Astrocyte of the cerebellum (primary cell): ENCODE measurements at regions of chr12 and their contacts with region 1.

Region 1: DNA sequence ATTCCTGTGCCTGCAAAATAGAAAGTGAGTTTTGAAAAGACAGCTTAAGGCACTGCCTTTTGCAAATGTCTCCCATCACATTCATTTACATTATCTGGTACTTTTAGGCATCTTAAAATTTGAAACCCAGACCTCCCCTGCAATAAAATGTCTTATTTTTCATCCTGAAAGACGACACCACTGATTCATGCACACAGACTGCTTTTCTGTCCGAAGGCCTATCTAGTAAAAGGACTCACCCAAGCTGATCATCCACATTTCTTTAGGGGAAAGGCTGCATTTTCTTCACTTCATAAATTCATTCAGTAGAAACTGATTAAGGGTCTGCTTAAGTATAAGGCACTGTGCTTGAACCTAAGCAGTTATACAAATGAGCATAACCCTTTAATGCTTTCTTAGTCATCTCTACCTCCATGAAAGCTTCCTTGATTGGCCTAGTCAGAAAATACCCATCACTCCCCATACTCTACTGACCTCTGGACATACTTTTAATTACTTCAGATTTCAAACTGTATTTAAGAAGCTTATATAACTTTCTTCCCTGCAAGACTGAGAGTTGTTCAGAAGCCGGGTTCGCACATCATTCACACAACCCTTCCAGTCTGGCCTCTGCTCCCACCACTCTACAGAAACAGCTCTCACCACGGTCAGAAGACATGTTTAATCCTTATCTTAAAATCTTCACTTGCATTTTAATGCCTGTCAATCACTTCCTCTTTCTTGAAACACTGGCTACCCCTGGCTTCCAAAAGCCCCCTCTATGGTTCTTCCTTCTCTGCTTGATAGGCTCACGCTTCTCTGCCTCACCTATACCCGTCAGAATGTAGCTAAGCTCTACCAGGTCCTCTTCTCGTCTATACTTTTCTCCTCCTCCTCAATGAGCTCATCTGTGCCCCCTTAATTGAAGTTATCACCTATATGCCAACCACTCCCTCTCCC is 288.6 kb downstream of the MED13L start:
- DNase-seq: no peak
- H3K4me3 ChIP-seq: no peak overlapping the region
- CTCF ChIP-seq: no peak

Region 2: GRCh38 chr12:116024769-116025168 is 35.9 kb after region 1 on chr12:
- in situ Hi-C with region 1: loop called (anchors 5 kb)
- DNase-seq: no peak
- H3K4me3 ChIP-seq: no peak overlapping the region
- CTCF ChIP-seq: no peak